MCF 10A (cell line): ENCODE measurements at regions of chr22 and their contacts with region 1.

Region 1: DNA sequence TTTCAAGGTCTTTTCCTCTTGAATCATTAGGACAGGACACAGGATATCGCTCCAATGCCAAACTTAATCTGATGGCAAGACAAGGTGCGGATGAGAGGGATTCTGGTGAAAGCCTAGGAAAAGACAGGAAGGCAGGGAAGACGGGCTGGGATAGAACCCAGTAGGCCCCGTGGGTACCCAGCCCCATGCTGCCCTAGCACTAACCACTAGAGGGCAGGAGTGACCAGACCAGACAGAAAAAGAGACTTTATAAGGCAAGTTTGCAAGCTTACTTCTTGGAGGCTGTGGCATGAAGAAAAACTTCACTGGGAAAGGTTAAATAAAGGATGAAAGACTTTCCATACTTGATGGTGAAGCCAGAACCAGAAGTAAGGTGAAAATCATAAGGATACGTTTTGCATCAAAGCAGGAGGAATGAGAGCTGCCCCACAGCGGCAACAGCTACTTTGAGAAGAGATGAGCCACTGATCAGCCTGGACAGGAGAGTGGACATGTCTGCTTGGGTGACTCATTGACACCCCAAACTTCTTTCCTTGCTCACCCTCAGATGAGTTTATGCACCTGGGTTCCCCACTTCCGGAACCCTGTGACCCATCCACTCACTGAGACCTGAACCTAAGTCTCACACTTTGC is 39.8 kb downstream of the SYN3 start:
- DNase-seq: peak; percentile 57
- H3K4me3 Mint-ChIP-seq: no peak overlapping the region
- H3K27ac Mint-ChIP-seq: no peak overlapping the region
- H3K4me1 Mint-ChIP-seq: peaks cover 14% of the 10 kb centered on the region
- H3K27me3 Mint-ChIP-seq: no peaks in the 10 kb centered on the region
- CTCF ChIP-seq: peak; percentile 80

Region 2: GRCh38 chr22:33006220-33006954 is 12.0 kb before region 1 on chr22:
- CTCF ChIA-PET with region 1: interaction called, 29 read pairs
- POLR2A ChIA-PET with region 1: no interaction called
- intact Hi-C with region 1: no loop called
- DNase-seq: peak; percentile 92
- H3K4me3 Mint-ChIP-seq: peak overlapping the region; percentile 52
- H3K27ac Mint-ChIP-seq: no peak overlapping the region
- H3K4me1 Mint-ChIP-seq: peaks cover 24% of the 10 kb centered on the region
- H3K27me3 Mint-ChIP-seq: no peaks in the 10 kb centered on the region
- CTCF ChIP-seq: no peak

Region 3: GRCh38 chr22:33038131-33038772 is 19.9 kb after region 1 on chr22:
- CTCF ChIA-PET with region 1: interaction called, 126 read pairs
- POLR2A ChIA-PET with region 1: no interaction called
- intact Hi-C with region 1: no loop called
- DNase-seq: peak; percentile 54
- H3K4me3 Mint-ChIP-seq: no peak overlapping the region
- H3K27ac Mint-ChIP-seq: no peak overlapping the region
- H3K4me1 Mint-ChIP-seq: peaks cover 20% of the 10 kb centered on the region
- H3K27me3 Mint-ChIP-seq: no peaks in the 10 kb centered on the region
- CTCF ChIP-seq: no peak

Region 4: GRCh38 chr22:33126881-33127280 is 108.5 kb after region 1 on chr22:
- CTCF ChIA-PET with region 1: interaction called, 62 read pairs
- POLR2A ChIA-PET with region 1: interaction called, 3 read pairs
- intact Hi-C with region 1: loop called (anchors 1 kb)
- DNase-seq: peak; percentile 50
- H3K4me3 Mint-ChIP-seq: no peak overlapping the region
- H3K27ac Mint-ChIP-seq: no peak overlapping the region
- H3K4me1 Mint-ChIP-seq: peaks cover 5% of the 10 kb centered on the region
- H3K27me3 Mint-ChIP-seq: no peaks in the 10 kb centered on the region
- CTCF ChIP-seq: peak; percentile 61

Region 5: DNA sequence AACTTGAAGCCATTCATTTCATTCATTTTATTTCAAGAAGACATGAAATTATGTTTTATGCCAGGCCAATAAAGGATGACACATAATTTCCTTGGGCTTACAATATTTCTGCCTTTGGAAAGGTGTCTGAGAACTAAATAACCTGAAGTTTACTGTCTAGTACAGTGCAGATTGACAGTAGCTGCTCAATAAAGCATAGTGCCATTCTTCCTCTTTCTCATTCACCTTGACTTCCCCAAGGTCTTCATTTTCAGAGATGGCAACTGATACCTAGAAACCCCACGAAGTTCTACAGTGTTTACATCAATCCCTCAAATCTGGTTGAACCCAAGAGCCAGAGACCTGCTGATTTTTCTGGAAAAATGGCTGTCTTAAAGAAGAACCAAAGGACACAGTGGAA is 184.1 kb after region 1 on chr22:
- CTCF ChIA-PET with region 1: interaction called, 101 read pairs
- POLR2A ChIA-PET with region 1: interaction called, 11 read pairs
- intact Hi-C with region 1: loop called (anchors 1 kb)
- DNase-seq: no peak
- H3K4me3 Mint-ChIP-seq: no peak overlapping the region
- H3K27ac Mint-ChIP-seq: no peak overlapping the region
- H3K4me1 Mint-ChIP-seq: peaks cover 9% of the 10 kb centered on the region
- H3K27me3 Mint-ChIP-seq: peaks cover 43% of the 10 kb centered on the region
- CTCF ChIP-seq: no peak

Region 6: DNA sequence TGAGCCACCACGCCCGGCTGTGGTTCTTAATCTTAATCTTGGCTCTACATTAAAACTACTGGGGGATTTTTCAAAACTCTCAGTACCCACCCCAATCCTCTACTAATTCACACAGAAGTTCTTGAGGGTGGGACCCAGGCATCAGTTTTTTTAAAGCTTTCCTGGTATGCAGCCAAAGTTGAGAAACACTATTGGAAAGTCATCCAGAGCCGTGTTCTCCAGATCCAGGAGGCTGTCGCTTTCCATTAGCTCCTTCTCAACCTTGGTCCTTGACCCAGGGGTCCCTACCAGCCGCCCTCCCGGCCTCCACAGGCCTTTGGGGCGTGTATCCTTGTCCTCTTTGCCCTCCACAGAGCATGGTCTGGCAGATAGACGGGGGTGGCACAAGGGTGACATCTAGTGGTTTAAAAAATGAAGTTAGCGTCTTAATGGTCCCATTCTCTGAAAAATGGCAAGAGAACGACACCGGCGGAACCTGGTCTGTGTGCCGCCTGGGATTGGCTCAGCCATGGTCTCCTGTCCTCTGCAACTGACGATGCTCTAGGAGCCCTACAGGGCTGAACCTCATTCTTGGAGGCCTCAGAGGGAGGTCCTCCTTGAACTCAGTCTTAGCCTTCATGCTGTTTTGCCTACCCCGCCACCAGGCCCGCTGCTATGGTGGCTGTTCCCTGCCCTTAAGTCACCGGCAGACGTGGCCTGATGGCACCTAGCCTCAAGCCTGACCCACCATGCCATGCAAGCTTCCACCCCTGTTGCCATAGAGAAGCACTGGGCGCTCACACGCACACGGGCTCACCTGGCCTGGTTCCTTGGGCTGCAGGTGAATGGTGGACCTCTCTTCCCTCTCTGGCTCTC is 191.8 kb after region 1 on chr22:
- CTCF ChIA-PET with region 1: interaction called, 101 read pairs
- POLR2A ChIA-PET with region 1: no interaction called
- intact Hi-C with region 1: no loop called
- DNase-seq: peak; percentile 34
- H3K4me3 Mint-ChIP-seq: no peak overlapping the region
- H3K27ac Mint-ChIP-seq: no peak overlapping the region
- H3K4me1 Mint-ChIP-seq: peaks cover 8% of the 10 kb centered on the region
- H3K27me3 Mint-ChIP-seq: peaks cover 19% of the 10 kb centered on the region
- CTCF ChIP-seq: peak; percentile 74

Region 7: GRCh38 chr22:33271390-33272161 is 253.2 kb after region 1 on chr22:
- CTCF ChIA-PET with region 1: interaction called, 4 read pairs
- POLR2A ChIA-PET with region 1: no interaction called
- intact Hi-C with region 1: loop called (anchors 2 kb)
- DNase-seq: peak; percentile 62
- H3K4me3 Mint-ChIP-seq: no peak overlapping the region
- H3K27ac Mint-ChIP-seq: no peak overlapping the region
- H3K4me1 Mint-ChIP-seq: peaks cover 15% of the 10 kb centered on the region
- H3K27me3 Mint-ChIP-seq: no peaks in the 10 kb centered on the region
- CTCF ChIP-seq: no peak